ENCODE measurements at regions of chr10 and their contacts with region 1.

Region 1: DNA sequence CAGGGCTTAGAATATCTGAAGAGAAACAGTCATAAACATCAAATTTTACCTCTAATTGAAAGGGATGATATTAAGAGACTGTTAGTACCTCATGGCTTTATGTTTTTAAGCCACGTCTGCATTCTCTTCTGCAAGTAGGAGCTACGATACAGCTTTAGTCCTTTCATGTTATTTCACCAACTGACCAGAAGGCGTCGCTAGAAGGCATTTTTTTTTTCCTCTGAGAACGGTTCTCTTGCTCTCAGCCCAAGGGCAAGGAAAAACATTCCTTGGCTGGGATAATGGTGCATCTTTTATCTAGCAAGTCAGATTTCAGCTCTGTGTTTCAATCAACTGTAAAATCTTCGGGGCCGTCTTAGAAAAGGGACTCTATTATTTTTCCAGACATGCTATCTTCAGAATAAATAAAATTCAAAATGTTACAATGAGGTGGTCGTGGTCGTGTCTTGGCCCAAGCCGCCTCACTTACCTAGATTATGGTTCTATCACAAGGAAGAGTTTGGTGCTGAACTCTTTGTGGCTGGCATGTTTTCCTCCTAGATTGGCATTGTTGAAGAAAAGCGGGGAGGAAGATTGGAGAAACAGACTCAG is 41.6 kb upstream of the LYZL2 start:
- DNase-seq: no peak
- ATAC-seq: peak; percentile 76
- H3K4me3 Mint-ChIP-seq: peak overlapping the region; percentile 58
- H3K27ac Mint-ChIP-seq: no peak overlapping the region
- H3K4me1 Mint-ChIP-seq: peaks cover 26% of the 10 kb centered on the region
- H3K27me3 Mint-ChIP-seq: peaks cover 9% of the 10 kb centered on the region

Region 2: DNA sequence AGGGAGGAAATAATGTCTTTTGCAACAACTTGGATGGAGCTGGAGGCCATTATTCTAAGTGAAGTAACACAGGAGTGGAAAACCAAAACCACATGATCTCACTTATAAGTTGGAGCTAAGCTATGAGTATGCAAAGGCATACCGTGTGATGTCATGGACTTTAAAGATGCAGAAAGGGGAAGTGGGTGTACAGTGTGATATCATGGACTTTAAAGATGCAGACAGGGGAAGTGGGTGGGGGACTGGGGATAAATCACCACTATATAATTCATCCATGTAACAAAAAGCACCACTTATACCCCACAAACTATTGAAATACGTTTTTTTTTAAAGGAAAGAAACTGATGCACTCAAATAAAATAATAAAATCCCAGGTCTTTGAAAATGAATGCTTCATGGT is 71.1 kb before region 1 on chr10:
- CTCF ChIA-PET with region 1: no interaction called
- DNase-seq: no peak
- ATAC-seq: peak; percentile 36
- H3K4me3 Mint-ChIP-seq: no peak overlapping the region
- H3K27ac Mint-ChIP-seq: no peak overlapping the region
- H3K4me1 Mint-ChIP-seq: peaks cover 3% of the 10 kb centered on the region
- H3K27me3 Mint-ChIP-seq: peaks cover 26% of the 10 kb centered on the region

Region 3: GRCh38 chr10:30639946-30640786 is 31.0 kb before region 1 on chr10:
- CTCF ChIA-PET with region 1: interaction called, 21 read pairs
- DNase-seq: peak; percentile 38
- ATAC-seq: peak; percentile 30
- H3K4me3 Mint-ChIP-seq: no peak overlapping the region
- H3K27ac Mint-ChIP-seq: no peak overlapping the region
- H3K4me1 Mint-ChIP-seq: peaks cover 18% of the 10 kb centered on the region
- H3K27me3 Mint-ChIP-seq: peaks cover 54% of the 10 kb centered on the region

Region 4: GRCh38 chr10:30758338-30758737 is 87.2 kb after region 1 on chr10:
- CTCF ChIA-PET with region 1: no interaction called
- DNase-seq: no peak
- ATAC-seq: no peak
- H3K4me3 Mint-ChIP-seq: no peak overlapping the region
- H3K27ac Mint-ChIP-seq: no peak overlapping the region
- H3K4me1 Mint-ChIP-seq: peaks cover 21% of the 10 kb centered on the region
- H3K27me3 Mint-ChIP-seq: no peaks in the 10 kb centered on the region

Measured in activated CD8-positive, alpha-beta memory T cell treated with anti-CD3 and anti-CD28 coated beads, Interleukin-2, amount 10 ng/mL, durations not matched to agents 7 days and 5 days (primary cell).